PC-9 (cell line): ENCODE measurements at regions of chr2 and their contacts with region 1.

Region 1: GRCh38 chr2:214809751-214810564 is 475 bp upstream of the BARD1 start:
- DNase-seq: peak; percentile 94 to 100
- H3K4me3 ChIP-seq: peak overlapping the region; percentile 75
- H3K27ac ChIP-seq: peak overlapping the region; percentile 83
- H3K4me1 ChIP-seq: peaks cover 35% of the 10 kb centered on the region
- H3K27me3 ChIP-seq: no peaks in the 10 kb centered on the region
- CTCF ChIP-seq: no peak

Region 2: DNA sequence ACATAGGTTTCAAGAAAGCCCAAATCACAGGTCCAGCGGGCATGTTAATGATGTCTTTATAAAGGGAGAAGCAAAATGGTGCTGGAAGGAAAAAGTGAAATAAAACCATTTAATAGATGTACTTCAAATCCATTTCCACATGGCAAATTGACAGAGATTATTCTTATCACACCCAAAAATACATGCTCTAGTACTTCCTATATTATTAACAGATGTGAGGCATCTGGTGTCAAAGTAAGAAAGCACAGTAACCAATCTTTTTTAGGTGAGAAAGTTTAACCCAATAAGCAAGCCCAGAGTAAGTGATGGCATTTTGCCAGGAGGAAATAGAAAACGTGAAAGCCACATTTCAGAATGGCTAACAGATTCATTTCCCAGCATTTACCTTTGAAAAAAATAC is 200.4 kb after region 1 on chr2:
- CTCF ChIA-PET with region 1: no interaction called
- POLR2A ChIA-PET with region 1: interaction called, 11 read pairs
- intact Hi-C with region 1: no loop called
- DNase-seq: no peak
- H3K4me3 ChIP-seq: no peak overlapping the region
- H3K27ac ChIP-seq: no peak overlapping the region
- H3K4me1 ChIP-seq: no peaks in the 10 kb centered on the region
- H3K27me3 ChIP-seq: no peaks in the 10 kb centered on the region
- CTCF ChIP-seq: no peak

Region 3: DNA sequence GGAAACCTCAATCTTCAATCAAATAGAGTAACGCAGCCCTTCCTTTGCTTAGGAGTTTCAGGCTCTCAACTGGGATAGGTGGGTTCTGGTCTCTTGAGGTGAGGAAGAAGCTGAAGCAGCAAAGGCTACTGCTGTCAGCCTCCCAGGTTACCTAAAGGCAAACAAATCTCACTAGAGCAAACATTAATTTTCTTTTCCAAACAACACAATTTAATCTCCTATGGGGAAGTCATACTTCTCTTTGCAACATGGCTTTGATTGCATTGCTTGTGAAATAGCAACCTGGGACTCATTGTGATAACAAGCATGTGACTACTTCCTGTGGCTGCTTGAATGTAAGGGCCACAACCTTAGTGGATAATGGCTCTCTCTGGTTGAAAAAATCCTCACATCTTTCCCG is 404.4 kb after region 1 on chr2:
- CTCF ChIA-PET with region 1: no interaction called
- POLR2A ChIA-PET with region 1: no interaction called
- intact Hi-C with region 1: no loop called
- DNase-seq: no peak
- H3K4me3 ChIP-seq: no peak overlapping the region
- H3K27ac ChIP-seq: no peak overlapping the region
- H3K4me1 ChIP-seq: 0 out of 2 replicates have a peak, but pooled peaks cover 3% of the 10 kb centered on the region
- H3K27me3 ChIP-seq: no peaks in the 10 kb centered on the region
- CTCF ChIP-seq: no peak

Region 4: GRCh38 chr2:215394102-215394805 is 584.3 kb after region 1 on chr2:
- CTCF ChIA-PET with region 1: no interaction called
- POLR2A ChIA-PET with region 1: interaction called, 14 read pairs
- intact Hi-C with region 1: no loop called
- DNase-seq: no peak
- H3K4me3 ChIP-seq: no peak overlapping the region
- H3K27ac ChIP-seq: no peak overlapping the region
- H3K4me1 ChIP-seq: peaks cover 17% of the 10 kb centered on the region
- H3K27me3 ChIP-seq: no peaks in the 10 kb centered on the region
- CTCF ChIP-seq: no peak

Region 5: DNA sequence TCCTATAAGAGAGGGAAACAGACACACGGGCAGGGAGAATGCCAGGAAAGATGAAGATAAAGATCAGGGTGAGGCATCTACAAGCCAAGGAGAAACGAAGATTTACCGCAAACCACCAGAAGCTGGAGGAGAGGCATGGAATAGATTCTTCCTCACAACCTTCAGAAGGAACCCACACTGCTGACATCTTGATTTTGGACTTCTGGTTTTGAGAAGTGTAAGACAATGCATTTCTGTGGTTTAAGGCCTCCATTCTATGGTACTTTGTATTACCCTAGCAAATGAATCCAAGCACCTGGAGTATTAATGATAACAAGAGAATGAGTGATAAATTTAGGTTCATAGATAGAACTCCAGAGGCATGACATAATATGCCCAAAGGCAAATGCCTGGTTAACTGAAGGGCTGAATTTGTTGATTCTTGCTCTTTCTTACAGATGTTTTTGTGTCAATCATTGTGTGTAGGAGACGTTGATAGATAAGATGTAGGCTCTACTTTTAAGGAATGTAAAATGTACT is 637.8 kb after region 1 on chr2:
- CTCF ChIA-PET with region 1: no interaction called
- POLR2A ChIA-PET with region 1: no interaction called
- intact Hi-C with region 1: loop called (anchors 5 kb)
- DNase-seq: peak in 1 of 2 experiments; percentile 48
- H3K4me3 ChIP-seq: no peak overlapping the region
- H3K27ac ChIP-seq: no peak overlapping the region
- H3K4me1 ChIP-seq: no peaks in the 10 kb centered on the region
- H3K27me3 ChIP-seq: no peaks in the 10 kb centered on the region
- CTCF ChIP-seq: no peak